ENCODE measurements at regions of chr20 and their contacts with region 1.

Region 1: GRCh38 chr20:16801919-16802911 is 54.1 kb downstream of the OTOR start:
- DNase-seq: peak; percentile 64 to 84 (median 69)
- ATAC-seq: no peak
- H3K4me3 ChIP-seq: no peak overlapping the region
- H3K27ac ChIP-seq: no peak overlapping the region
- H3K4me1 ChIP-seq: no peaks in the 10 kb centered on the region
- H3K27me3 ChIP-seq: no peaks in the 10 kb centered on the region
- CTCF ChIP-seq: peak; percentile 66 to 85 (median 75)
- POLR2A ChIP-seq: no peak

Region 2: GRCh38 chr20:16709017-16709416 is 93.2 kb before region 1 on chr20:
- intact Hi-C with region 1: no loop called
- DNase-seq: no peak
- ATAC-seq: no peak
- H3K4me3 ChIP-seq: no peak overlapping the region
- H3K27ac ChIP-seq: no peak overlapping the region
- H3K4me1 ChIP-seq: no peaks in the 10 kb centered on the region
- H3K27me3 ChIP-seq: no peaks in the 10 kb centered on the region
- CTCF ChIP-seq: no peak
- POLR2A ChIP-seq: no peak

Region 3: GRCh38 chr20:17281478-17281877 is 479.3 kb after region 1 on chr20:
- intact Hi-C with region 1: loop called (anchors 10 kb)
- DNase-seq: peak; percentile 48 to 53 (median 50)
- ATAC-seq: no peak
- H3K4me3 ChIP-seq: no peak overlapping the region
- H3K27ac ChIP-seq: no peak overlapping the region
- H3K4me1 ChIP-seq: no peaks in the 10 kb centered on the region
- H3K27me3 ChIP-seq: no peaks in the 10 kb centered on the region
- CTCF ChIP-seq: peak in 6 of 7 experiments; percentile 22 to 39 (median 38)
- POLR2A ChIP-seq: no peak

Region 4: DNA sequence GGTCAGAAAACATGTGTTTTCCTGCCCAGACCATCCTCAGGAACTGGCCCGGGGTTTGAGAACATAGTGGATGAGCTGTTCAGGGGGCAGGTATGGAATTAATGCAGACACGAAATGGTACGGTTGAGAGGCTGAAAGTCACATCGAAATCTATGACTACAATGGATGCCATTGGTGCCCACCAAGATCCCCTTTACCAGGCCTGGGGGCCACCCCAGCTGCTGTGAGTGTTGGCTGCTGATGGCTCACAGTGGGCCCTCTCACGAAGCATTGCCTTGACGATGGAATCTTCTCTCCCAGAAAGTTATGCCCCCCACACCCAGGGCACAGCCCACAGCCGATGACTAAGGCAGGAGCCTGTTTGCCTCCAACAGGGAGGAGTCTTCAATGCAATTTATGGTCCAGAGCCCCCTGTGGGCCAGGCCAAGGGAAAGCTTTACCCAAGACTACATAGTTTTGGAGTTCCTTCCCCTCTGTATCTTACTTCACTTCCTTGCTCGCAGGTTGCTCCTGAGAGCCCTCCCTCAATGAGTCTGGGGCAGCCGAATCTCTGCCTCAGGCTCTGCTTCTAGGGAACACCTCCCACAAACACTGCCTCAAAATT is 636.3 kb after region 1 on chr20:
- intact Hi-C with region 1: loop called (anchors 5 kb)
- DNase-seq: no peak
- ATAC-seq: no peak
- H3K4me3 ChIP-seq: no peak overlapping the region
- H3K27ac ChIP-seq: no peak overlapping the region
- H3K4me1 ChIP-seq: no peaks in the 10 kb centered on the region
- H3K27me3 ChIP-seq: no peaks in the 10 kb centered on the region
- CTCF ChIP-seq: no peak
- POLR2A ChIP-seq: no peak